ENCODE measurements at regions of chr12 and their contacts with region 1.

Region 1: DNA sequence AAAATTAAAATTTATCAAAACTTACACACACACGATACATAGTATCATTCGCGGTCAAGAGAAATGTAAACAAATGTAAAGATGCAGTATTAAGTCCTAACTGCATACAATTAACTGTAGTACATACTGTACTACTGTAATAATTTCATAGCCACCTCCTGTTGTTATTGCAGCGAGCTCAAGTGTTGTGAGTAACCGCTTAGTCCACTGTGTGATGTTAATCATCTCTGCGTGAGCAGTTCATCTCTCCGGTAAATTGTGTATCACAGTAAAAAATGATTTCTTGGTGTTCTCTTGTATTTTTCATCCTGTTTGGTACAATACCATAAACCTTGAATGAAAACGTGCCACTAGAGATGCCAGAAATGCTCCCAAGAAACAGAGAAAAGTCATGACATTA is 6.5 kb downstream of the EPS8 start:
- DNase-seq: no peak
- H3K4me3 Mint-ChIP-seq: no peak overlapping the region
- H3K27ac Mint-ChIP-seq: no peak overlapping the region
- H3K4me1 Mint-ChIP-seq: peaks cover 60% of the 10 kb centered on the region
- H3K27me3 Mint-ChIP-seq: no peaks in the 10 kb centered on the region
- CTCF ChIP-seq: no peak

Region 2: GRCh38 chr12:15712823-15713660 is 69.6 kb before region 1 on chr12:
- CTCF ChIA-PET with region 1: no interaction called
- intact Hi-C with region 1: loop called (anchors 2 kb)
- DNase-seq: peak; percentile 77
- H3K4me3 Mint-ChIP-seq: peak overlapping the region; percentile 66
- H3K27ac Mint-ChIP-seq: peak overlapping the region; percentile 98
- H3K4me1 Mint-ChIP-seq: peaks cover 75% of the 10 kb centered on the region
- H3K27me3 Mint-ChIP-seq: no peaks in the 10 kb centered on the region
- CTCF ChIP-seq: no peak

Region 3: DNA sequence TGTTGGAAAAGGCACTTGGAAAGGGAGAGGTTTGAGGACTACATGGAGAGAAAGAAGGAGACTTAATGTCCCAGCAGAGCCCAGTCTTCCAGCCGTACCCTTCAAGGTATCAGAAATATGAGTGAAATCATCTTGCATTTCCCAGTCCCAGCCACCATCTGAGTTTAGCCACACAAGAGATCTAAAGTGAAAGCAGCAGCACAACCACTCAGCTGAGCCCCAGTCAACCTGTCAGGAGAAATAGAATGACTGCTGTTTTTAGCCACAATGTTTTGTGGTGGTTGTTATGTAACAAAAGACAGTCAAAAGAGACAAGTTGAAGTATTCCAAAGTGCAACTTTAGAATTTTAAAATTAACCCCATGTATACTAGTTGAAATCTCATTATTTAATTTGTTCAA is 156.4 kb after region 1 on chr12:
- CTCF ChIA-PET with region 1: no interaction called
- intact Hi-C with region 1: no loop called
- DNase-seq: no peak
- H3K4me3 Mint-ChIP-seq: no peak overlapping the region
- H3K27ac Mint-ChIP-seq: peak overlapping the region; percentile 65
- H3K4me1 Mint-ChIP-seq: peaks cover 13% of the 10 kb centered on the region
- H3K27me3 Mint-ChIP-seq: no peaks in the 10 kb centered on the region
- CTCF ChIP-seq: no peak